Heart left ventricle (tissue), 16 donors: ENCODE measurements at regions of chr11 and their contacts with region 1.

Region 1: DNA sequence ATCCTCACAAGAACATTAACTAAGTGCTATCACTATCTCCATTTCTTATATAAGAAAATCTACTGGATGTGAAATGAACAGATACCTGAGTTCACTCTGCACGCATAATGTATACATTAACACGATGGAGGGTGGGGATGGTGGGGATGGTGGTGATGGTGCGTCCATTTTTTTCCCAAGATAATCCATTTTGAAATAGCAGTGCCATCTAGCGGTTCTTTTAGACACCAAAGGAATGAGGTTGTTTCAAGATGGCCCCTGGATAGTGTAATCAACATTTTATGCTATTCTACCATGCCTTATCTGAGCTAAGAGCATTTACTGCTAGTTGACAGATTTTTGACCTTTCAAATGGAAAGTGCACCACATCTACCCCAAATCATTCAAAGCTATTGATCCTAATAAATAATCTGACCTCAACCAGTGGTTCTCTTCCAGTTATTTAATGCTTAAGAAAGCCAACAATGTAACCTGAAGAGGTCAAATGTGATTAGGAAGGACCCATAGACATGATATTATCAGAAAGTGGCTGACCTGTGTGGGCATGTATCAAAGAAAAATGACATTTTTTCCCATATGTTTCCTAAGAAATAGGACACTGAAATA is 714.7 kb upstream of the TENM4 start:
- DNase-seq: no peak
- ATAC-seq: no peak
- H3K4me3 ChIP-seq: no peak overlapping the region
- H3K27ac ChIP-seq: no peak overlapping the region
- H3K4me1 ChIP-seq: no peaks in the 10 kb centered on the region
- H3K27me3 ChIP-seq: no peaks in the 10 kb centered on the region
- CTCF ChIP-seq: peak in 11 of 12 donors; percentile 23 to 56 (median 47)
- POLR2A ChIP-seq: no peak

Region 2: DNA sequence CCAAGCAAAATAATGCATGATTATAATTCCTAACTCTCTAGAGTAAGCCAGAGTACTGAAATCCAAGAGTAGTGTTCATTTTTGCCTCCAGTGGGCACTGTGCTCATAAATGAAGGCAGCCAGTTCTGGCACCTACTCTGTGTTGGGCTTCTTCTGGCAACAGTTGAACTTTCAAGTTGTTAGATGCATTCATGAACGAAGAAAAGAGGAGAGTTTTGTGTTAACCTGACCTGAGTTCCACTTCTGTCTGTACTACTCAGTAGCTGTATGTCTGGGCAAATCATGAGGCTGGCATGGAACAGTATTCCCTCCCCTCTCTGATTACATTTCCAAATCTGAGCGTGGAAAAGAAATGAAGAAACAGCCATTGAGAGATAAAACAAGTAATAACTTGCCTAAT is 694.4 kb before region 1 on chr11:
- intact Hi-C with region 1: loop called in 1 of 10 experiments (anchors 5 kb)
- DNase-seq: peak in 2 of 5 donors; percentile 12 to 25
- ATAC-seq: peak in 3 of 4 donors; percentile 70 to 80 (median 73)
- H3K4me3 ChIP-seq: no peak overlapping the region
- H3K27ac ChIP-seq: no peak overlapping the region
- H3K4me1 ChIP-seq: no peaks in the 10 kb centered on the region
- H3K27me3 ChIP-seq: peaks cover 0 to 16% (median 1%) of the 10 kb centered on the region in 9 donors
- CTCF ChIP-seq: peak in 11 of 12 donors; percentile 21 to 66 (median 49)
- POLR2A ChIP-seq: no peak

Region 3: GRCh38 chr11:79617561-79617960 is 538.0 kb before region 1 on chr11:
- intact Hi-C with region 1: loop called in 1 of 10 experiments (anchors 5 kb)
- DNase-seq: no peak
- ATAC-seq: no peak
- H3K4me3 ChIP-seq: no peak overlapping the region
- H3K27ac ChIP-seq: no peak overlapping the region
- H3K4me1 ChIP-seq: no peaks in the 10 kb centered on the region
- H3K27me3 ChIP-seq: no peaks in the 10 kb centered on the region
- CTCF ChIP-seq: no peak
- POLR2A ChIP-seq: no peak

Region 4: DNA sequence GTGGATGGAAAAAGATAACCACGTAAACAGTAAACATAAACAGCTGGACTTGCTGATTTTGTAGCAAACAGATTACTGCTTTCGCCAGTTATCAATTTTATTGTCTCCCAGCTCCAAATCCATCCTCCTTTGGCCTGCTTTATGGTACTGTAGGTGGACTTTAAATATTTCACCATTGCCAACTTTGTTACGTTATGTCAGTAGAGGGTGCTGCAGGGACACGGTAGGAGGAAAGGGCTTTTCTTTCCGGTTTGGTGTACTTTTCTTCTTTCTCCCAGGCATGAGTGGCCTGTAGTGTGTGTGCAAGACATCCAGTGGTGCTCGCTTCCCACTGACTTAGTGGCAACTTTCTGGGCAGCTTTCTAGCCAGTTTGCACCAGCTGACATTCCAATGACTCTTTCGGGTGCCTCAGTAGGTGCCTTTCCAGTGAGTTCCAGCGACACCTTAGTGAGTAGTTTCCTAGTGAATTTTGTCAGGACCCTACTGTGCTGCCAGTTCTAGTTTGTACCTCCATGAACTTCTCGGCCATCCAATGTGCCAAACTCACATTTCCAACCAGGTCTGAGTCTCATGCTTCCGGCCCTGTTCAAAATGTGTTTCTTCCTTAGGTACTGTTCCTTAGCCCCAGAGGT is 447.1 kb before region 1 on chr11:
- intact Hi-C with region 1: loop called in 5 of 10 experiments (anchors 10 kb)
- DNase-seq: no peak
- ATAC-seq: peak in 1 of 4 donors; percentile 44
- H3K4me3 ChIP-seq: no peak overlapping the region
- H3K27ac ChIP-seq: no peak overlapping the region
- H3K4me1 ChIP-seq: no peaks in the 10 kb centered on the region
- H3K27me3 ChIP-seq: no peaks in the 10 kb centered on the region
- CTCF ChIP-seq: peak in 8 of 12 donors; percentile 16 to 45 (median 33)
- POLR2A ChIP-seq: no peak

Region 5: GRCh38 chr11:79762279-79762921 is 393.1 kb before region 1 on chr11:
- intact Hi-C with region 1: loop called (anchors 5 to 10 kb)
- DNase-seq: no peak
- ATAC-seq: peak in 1 of 4 donors; percentile 31
- H3K4me3 ChIP-seq: no peak overlapping the region
- H3K27ac ChIP-seq: no peak overlapping the region
- H3K4me1 ChIP-seq: no peaks in the 10 kb centered on the region
- H3K27me3 ChIP-seq: no peaks in the 10 kb centered on the region
- CTCF ChIP-seq: peak in 6 of 12 donors; percentile 13 to 46 (median 30)
- POLR2A ChIP-seq: no peak

Region 6: DNA sequence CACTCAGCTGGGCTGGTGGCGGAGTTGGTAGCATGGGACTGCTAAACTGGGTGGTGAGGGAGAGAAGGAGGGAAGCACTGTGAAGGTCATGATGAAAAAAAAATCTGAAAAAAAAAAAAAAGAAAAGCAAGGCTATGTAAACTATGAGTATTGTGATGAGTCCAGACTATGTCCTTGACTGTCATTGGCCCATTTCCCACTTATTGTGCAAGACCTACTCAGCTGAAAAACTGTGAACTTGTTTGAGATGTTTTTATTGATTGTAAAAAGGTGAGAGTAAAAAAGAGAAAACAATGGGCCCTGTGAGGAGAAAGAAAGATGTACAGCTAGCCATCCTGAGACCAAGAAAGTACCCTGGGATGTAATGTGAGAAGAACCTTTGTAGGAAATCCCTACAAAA is 83.7 kb after region 1 on chr11:
- intact Hi-C with region 1: no loop called
- DNase-seq: no peak
- ATAC-seq: no peak
- H3K4me3 ChIP-seq: no peak overlapping the region
- H3K27ac ChIP-seq: no peak overlapping the region
- H3K4me1 ChIP-seq: no peaks in the 10 kb centered on the region
- H3K27me3 ChIP-seq: no peaks in the 10 kb centered on the region
- CTCF ChIP-seq: no peak
- POLR2A ChIP-seq: no peak